ENCODE measurements at regions of chrX and their contacts with region 1.

Region 1: DNA sequence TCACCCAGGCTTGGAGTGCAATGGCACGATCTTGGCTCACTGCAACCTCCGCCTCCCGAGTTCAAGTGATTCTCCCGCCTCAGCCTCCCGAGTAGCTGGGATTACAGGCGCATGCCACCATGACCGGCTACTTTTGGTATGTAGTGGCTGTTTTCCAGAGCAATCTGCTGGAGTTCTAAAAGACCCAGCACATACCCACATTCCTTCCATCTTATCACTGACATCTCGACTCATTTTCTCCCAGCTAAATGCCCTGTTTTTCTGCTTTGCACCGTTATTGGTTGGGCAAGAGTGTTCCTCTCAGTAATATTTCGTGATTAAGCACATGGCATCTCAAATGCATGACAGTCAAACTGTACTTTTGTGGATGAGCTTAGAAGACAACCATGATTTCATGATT is 53.7 kb downstream of the PRKX start:
- DNase-seq: no peak
- H3K4me3 ChIP-seq: no peak overlapping the region
- H3K4me3 Mint-ChIP-seq: no peak overlapping the region
- H3K27ac Mint-ChIP-seq: peak overlapping the region; percentile 29
- H3K4me1 ChIP-seq: peaks cover 9% of the 10 kb centered on the region; the same call in 1 of the 2 replicates
- H3K4me1 Mint-ChIP-seq: peaks cover 22% of the 10 kb centered on the region
- H3K27me3 ChIP-seq: no peaks in the 10 kb centered on the region
- H3K27me3 Mint-ChIP-seq: no peaks in the 10 kb centered on the region
- CTCF ChIP-seq: no peak

Region 2: GRCh38 chrX:3450881-3451570 is 208.7 kb before region 1 on chrX:
- CTCF ChIA-PET with region 1: no interaction called
- POLR2A ChIA-PET with region 1: no interaction called
- intact Hi-C with region 1: no loop called
- DNase-seq: no peak
- H3K4me3 ChIP-seq: no peak overlapping the region
- H3K4me3 Mint-ChIP-seq: no peak overlapping the region
- H3K27ac Mint-ChIP-seq: no peak overlapping the region
- H3K4me1 ChIP-seq: no peaks in the 10 kb centered on the region
- H3K4me1 Mint-ChIP-seq: no peaks in the 10 kb centered on the region
- H3K27me3 ChIP-seq: no peaks in the 10 kb centered on the region
- H3K27me3 Mint-ChIP-seq: no peaks in the 10 kb centered on the region
- CTCF ChIP-seq: no peak

Region 3: DNA sequence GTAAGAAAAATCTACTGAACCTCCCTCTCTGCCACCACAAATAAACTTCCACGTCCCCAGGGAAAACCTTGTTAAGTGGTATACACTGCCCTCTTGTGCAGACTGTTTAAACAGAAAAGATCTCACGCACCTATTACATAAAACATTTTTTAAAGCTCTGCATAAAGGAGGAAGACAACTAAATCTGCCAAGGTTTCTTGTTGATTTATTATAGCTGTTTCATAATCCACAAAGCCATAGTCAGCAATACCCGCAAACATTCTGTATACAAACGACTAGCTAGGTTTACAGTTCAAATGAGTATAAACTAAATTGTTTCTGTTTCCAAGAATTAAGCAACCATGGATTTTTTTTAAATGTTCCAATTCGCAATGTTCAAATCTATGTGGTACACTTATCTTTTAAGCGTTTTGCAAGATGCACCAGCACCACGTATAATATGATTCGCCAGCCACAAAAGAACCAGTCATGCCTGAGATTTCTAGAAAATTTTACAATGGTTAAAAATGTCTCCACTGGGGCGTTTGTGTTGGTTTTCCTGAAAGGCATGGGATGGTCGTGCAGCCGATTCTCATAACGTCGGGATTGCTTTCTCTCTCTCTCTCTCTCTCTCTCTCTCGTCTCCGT is 110.9 kb before region 1 on chrX:
- CTCF ChIA-PET with region 1: no interaction called
- POLR2A ChIA-PET with region 1: no interaction called
- intact Hi-C with region 1: no loop called
- DNase-seq: no peak
- H3K4me3 ChIP-seq: peak overlapping the region; percentile 2
- H3K4me3 Mint-ChIP-seq: peak overlapping the region; percentile 77
- H3K27ac Mint-ChIP-seq: no peak overlapping the region
- H3K4me1 ChIP-seq: no peaks in the 10 kb centered on the region; the same call in 1 of the 2 replicates
- H3K4me1 Mint-ChIP-seq: peaks cover 11% of the 10 kb centered on the region
- H3K27me3 ChIP-seq: no peaks in the 10 kb centered on the region
- H3K27me3 Mint-ChIP-seq: no peaks in the 10 kb centered on the region
- CTCF ChIP-seq: peak in 1 of 2 experiments; percentile 13

Region 4: DNA sequence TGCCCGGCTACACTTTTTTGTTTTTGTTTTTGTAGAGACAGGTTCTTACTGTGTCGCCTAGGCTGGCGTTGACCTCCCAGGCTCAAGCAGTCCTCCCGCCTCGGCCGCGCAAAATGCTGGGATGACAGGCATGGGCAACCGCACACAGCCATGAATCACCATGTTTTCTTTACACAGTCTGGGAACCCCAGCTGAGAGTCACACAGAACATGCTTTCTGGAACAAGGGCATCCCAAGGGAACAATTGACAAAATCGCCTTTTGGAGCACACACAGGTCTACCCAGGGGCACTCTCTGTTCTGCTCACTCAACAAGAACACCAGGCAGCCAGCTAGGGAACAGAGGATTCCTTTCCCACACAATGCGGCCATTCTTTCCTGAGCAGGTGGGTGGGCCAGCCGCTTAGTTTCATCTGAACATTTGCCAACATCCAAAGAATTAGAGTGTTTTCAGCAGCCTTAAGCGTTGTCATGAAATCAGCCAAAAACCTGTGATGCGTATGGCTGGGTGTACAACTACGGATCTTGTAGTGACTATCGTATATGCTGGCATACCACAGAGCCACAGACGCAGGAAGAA is 38.0 kb after region 1 on chrX:
- CTCF ChIA-PET with region 1: no interaction called
- POLR2A ChIA-PET with region 1: no interaction called
- intact Hi-C with region 1: loop called (anchors 5 kb)
- DNase-seq: no peak
- H3K4me3 ChIP-seq: no peak overlapping the region
- H3K4me3 Mint-ChIP-seq: peak overlapping the region; percentile 14
- H3K27ac Mint-ChIP-seq: peak overlapping the region; percentile 46
- H3K4me1 ChIP-seq: peaks cover 10% of the 10 kb centered on the region; the same call in 1 of the 2 replicates
- H3K4me1 Mint-ChIP-seq: no peaks in the 10 kb centered on the region
- H3K27me3 ChIP-seq: no peaks in the 10 kb centered on the region
- H3K27me3 Mint-ChIP-seq: no peaks in the 10 kb centered on the region
- CTCF ChIP-seq: no peak

Region 5: DNA sequence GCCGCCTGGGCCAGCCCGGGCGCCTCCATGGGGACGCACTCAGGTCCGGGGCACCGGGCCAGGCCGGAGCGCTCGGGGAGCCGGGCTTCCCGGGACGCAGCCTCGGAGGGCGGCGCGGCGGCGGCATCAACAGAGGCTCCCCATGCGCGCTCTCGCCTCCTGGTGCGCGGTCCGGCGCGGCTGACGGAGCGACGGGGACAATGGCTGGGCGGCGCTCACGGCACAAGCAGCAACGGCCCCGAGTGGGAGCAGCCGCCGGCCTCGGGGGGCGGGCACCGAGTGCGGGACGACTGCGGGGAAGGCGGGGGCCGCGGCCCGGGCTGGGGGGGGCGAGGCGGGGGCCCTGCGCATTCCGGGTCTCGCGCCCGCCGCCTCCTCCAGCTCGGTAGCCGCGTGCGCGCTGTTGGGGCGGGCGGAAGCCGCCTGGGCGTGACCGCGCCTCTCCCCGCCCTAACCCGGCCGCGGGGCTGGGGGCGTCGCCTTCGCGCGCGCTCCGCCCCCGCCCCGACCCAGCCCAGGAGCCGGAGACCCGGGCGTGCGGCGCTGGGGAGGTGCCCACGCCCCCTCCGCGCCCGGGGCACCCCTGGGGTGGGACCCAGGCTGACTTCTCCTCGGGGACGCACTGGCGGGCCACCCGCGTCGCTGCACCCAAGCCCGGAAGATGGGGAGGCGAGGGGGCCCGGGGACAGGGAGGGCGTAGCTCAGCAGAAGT is 53.6 kb after region 1 on chrX and contains the start of gene PRKX:
- CTCF ChIA-PET with region 1: no interaction called
- POLR2A ChIA-PET with region 1: no interaction called
- intact Hi-C with region 1: loop called (anchors 5 kb)
- DNase-seq: peak; percentile 40 to 70
- H3K4me3 ChIP-seq: peak within 1 kb of the TSS; percentile 70
- H3K4me3 Mint-ChIP-seq: peak within 1 kb of the TSS; percentile 83
- H3K27ac Mint-ChIP-seq: peak within 1 kb of the TSS; percentile 77
- H3K4me1 ChIP-seq: no peaks in the 10 kb centered on the region
- H3K4me1 Mint-ChIP-seq: no peaks in the 10 kb centered on the region
- H3K27me3 ChIP-seq: no peaks in the 10 kb centered on the region
- H3K27me3 Mint-ChIP-seq: no peaks in the 10 kb centered on the region
- CTCF ChIP-seq: no peak
- total RNA-seq, gene PRKX: 20.3 and 23.3 TPM in 2 replicates

Measured in Caco-2 (cell line).